Right ventricle myocardium inferior (tissue), 1 donor: ENCODE measurements at regions of chr5 and their contacts with region 1.

Region 1: DNA sequence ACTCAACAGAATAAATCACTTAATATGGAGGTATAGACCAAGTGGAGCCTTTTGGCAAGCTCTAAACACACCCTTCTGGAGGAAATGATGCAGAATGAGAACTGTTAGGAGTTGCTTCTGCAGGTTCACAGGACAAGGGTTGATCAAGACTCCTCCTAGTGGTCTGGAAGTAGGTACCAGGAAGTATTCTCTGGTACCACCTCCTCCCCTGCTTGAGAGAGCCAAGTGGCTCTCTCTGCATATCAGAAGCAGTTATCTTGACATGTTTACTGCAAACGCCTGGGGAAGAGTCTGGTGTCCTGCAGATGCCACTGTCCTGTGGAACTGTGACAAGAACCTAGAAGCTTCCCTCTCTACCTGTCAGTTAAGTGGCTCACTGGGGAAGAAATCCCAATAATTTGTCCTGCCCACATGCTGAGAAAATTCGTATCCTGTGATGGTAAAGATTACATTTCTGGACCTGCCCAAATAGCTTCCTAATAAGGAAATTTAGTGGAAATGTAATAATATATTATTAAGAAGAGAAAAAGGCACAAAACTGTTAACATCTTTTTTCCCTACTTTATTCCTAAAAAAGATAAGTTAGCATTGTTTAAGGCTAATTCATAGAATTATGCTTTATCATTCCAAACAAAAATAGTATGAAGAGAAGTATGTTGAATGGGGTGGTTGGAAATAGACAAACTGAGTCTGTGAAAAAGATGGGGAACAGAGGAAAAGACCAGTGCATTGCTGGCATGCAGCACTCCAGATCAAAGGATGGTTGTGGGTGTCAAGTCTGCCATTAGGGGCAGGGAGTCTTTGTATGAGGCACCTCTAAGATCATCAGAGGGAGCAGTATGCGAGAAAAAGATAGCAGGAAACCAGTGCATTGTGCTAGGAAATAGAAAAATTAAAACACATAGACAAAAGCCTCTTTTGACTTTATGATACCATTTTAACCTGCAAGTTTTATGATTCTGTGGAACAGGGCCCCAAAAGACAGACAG is 118.8 kb downstream of the CDC42SE2 start:
- DNase-seq: no peak
- ATAC-seq: peak; percentile 39

Region 2: DNA sequence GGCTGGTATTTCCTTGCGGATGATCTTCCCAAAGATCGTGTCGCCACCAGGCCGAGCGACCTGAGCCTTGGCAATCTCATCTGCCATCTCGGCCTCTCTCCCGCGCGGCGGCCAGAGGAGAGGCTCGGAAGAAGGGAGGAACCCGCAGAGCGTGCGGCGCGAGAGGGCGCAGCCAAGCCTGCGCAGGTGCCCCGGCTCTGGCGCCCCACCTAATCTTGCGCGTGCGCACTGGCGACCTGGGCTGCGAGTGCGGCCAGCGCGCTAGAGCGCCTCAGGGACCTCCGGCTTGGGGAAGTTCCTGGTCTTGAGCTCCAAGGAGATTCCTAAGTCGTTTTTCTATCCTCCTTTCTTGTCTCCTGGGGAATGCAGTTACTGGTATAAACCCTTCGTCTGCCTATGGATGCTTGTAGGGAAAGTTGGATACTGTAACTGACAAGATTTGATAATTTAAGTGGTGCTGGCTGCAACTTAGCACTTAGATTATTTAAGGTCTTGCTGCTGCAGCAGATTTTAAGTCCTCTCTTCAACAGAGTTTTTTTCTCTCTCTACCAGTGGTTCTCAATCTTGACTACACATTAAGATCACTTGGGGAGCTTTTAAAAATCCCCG is 217.5 kb before region 1 on chr5 and contains the start of gene HINT1:
- intact Hi-C with region 1: loop called (anchors 10 kb)
- DNase-seq: peak; percentile 97
- ATAC-seq: peak; percentile 97
- total RNA-seq, gene HINT1: 200 TPM

Region 3: DNA sequence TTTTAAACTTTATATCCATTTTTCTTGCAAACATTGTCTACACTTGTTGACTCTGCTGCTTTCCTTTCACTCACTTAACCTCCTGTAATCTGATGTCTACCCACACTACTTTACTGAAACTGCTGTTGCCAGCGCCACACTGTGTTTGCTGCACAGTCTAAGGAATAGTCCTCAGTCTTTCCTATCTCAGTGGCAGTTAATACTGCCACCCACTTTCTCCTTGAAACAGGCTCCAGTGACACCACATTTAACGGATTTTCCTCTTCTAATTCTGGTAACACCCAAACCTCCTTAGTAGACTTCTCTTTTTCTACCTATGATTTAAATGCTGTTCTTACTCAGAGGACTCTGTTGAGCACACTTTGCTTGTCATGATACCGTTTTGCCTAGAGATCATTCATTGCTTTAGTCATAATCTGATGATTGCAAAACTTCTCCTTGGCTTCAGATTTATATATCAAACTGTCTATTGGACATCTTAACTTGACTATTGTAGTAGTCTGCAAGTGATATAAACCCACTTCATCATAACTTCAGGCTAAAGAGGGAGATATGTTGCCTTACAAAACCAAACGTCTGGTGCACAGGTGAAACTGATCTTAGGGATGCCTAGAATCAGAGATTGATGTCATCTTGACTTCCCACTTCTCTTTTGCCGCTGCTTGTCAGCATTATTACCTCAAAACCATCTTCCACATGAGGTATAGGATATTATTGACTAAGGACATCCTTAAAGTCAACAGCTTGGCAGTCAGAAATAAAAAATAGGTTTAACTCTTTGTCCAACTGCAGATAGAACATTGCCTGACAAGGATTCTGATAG is 24.8 kb before region 1 on chr5:
- intact Hi-C with region 1: no loop called
- DNase-seq: no peak
- ATAC-seq: no peak

Region 4: GRCh38 chr5:132007399-132008165 is 624.9 kb after region 1 on chr5:
- intact Hi-C with region 1: no loop called
- DNase-seq: peak; percentile 72
- ATAC-seq: peak; percentile 70